Naive thymus-derived CD4-positive, alpha-beta T cell (primary cell): ENCODE measurements at regions of chr1 and their contacts with region 1.

Region 1: GRCh38 chr1:201895913-201896807 is 7.5 kb downstream of the SHISA4 start:
- DNase-seq: peak; percentile 54 to 86 (median 73)
- ATAC-seq: peak; percentile 93
- H3K4me3 ChIP-seq: no peak overlapping the region
- H3K4me3 Mint-ChIP-seq: peak overlapping the region in 9 of 10 donors; percentile 5 to 73 (median 60)
- H3K27ac ChIP-seq: no peak overlapping the region
- H3K27ac Mint-ChIP-seq: peak overlapping the region in 7 of 9 donors; percentile 10 to 86 (median 59)
- H3K4me1 ChIP-seq: peaks cover 0 to 8% of the 10 kb centered on the region in 2 donors
- H3K4me1 Mint-ChIP-seq: peaks cover 0 to 16% (median 6%) of the 10 kb centered on the region in 7 donors
- H3K27me3 ChIP-seq: no peaks in the 10 kb centered on the region
- H3K27me3 Mint-ChIP-seq: peaks cover 12 to 34% (median 25%) of the 10 kb centered on the region in 5 donors

Region 2: DNA sequence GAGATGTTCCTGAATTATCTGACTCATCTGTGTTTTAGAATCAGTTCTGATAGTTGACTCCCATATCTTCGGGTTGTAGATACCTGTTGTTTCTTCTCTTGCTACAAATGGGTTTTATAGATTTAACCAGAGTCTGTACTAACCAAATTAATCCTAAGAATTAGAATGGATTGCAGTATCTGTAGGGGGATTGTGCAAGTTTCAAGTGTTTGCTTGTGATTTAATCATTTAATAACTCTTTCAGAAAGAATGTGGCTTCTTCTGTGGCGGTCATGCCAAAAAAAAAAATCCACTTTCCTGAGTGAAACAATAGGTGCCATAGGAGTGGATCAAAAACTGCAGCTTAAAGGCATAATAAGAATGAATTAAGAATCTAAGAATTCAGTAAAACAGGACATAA is 57.8 kb before region 1 on chr1:
- CTCF ChIA-PET with region 1: no interaction called
- POLR2A ChIA-PET with region 1: interaction called, 10 read pairs
- intact Hi-C with region 1: no loop called
- DNase-seq: no peak
- ATAC-seq: no peak
- H3K4me3 ChIP-seq: no peak overlapping the region
- H3K4me3 Mint-ChIP-seq: no peak overlapping the region
- H3K27ac ChIP-seq: no peak overlapping the region
- H3K27ac Mint-ChIP-seq: no peak overlapping the region
- H3K4me1 ChIP-seq: no peaks in the 10 kb centered on the region
- H3K4me1 Mint-ChIP-seq: peaks cover 27 to 80% (median 58%) of the 10 kb centered on the region in 7 donors
- H3K27me3 ChIP-seq: no peaks in the 10 kb centered on the region
- H3K27me3 Mint-ChIP-seq: no peaks in the 10 kb centered on the region

Region 3: DNA sequence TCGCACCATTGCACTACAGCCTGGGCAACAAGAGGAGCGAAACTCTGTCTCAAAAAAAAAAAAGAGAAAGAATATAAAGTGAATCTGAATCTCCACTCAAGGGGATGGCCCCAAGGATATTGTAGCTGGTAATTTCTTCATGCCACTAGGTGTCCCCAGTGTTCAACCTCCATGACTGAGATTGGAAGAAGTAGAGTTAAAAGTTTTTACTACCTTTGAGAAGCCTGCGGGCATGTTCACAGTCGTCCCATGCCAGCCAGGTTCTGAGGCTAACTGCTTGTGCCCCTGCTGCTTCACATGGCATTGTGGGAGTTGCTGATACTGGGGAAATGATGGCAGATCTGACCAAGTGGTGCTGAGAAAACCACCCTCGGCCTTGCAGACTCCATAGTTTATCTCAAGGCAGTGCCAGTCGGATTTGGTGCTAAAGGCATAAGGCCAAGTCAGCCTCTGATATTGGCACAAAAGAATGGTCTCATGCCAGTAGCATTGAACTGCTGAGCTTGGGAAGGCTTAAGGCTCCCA is 18.2 kb before region 1 on chr1:
- CTCF ChIA-PET with region 1: interaction called, 5 read pairs
- POLR2A ChIA-PET with region 1: no interaction called
- intact Hi-C with region 1: loop called in 1 of 2 experiments (anchors 2 kb)
- DNase-seq: peak in 2 of 9 donors; percentile 22 to 23
- ATAC-seq: peak; percentile 55
- H3K4me3 ChIP-seq: no peak overlapping the region
- H3K4me3 Mint-ChIP-seq: no peak overlapping the region
- H3K27ac ChIP-seq: no peak overlapping the region
- H3K27ac Mint-ChIP-seq: peak overlapping the region in 4 of 9 donors; percentile 40 to 60 (median 46)
- H3K4me1 ChIP-seq: no peaks in the 10 kb centered on the region
- H3K4me1 Mint-ChIP-seq: peaks cover 0 to 3% (median 0%) of the 10 kb centered on the region in 7 donors
- H3K27me3 ChIP-seq: no peaks in the 10 kb centered on the region
- H3K27me3 Mint-ChIP-seq: no peaks in the 10 kb centered on the region

Region 4: GRCh38 chr1:201885531-201886075 is 10.6 kb before region 1 on chr1:
- CTCF ChIA-PET with region 1: interaction called, 12 read pairs
- POLR2A ChIA-PET with region 1: no interaction called
- intact Hi-C with region 1: no loop called
- DNase-seq: no peak
- ATAC-seq: no peak
- H3K4me3 ChIP-seq: no peak overlapping the region
- H3K4me3 Mint-ChIP-seq: no peak overlapping the region
- H3K27ac ChIP-seq: no peak overlapping the region
- H3K27ac Mint-ChIP-seq: no peak overlapping the region
- H3K4me1 ChIP-seq: peaks cover 0 to 5% of the 10 kb centered on the region in 2 donors
- H3K4me1 Mint-ChIP-seq: peaks cover 2 to 18% (median 10%) of the 10 kb centered on the region in 7 donors
- H3K27me3 ChIP-seq: peaks cover 0 to 6% of the 10 kb centered on the region in 2 donors
- H3K27me3 Mint-ChIP-seq: peaks cover 5 to 35% (median 19%) of the 10 kb centered on the region in 5 donors

Region 5: DNA sequence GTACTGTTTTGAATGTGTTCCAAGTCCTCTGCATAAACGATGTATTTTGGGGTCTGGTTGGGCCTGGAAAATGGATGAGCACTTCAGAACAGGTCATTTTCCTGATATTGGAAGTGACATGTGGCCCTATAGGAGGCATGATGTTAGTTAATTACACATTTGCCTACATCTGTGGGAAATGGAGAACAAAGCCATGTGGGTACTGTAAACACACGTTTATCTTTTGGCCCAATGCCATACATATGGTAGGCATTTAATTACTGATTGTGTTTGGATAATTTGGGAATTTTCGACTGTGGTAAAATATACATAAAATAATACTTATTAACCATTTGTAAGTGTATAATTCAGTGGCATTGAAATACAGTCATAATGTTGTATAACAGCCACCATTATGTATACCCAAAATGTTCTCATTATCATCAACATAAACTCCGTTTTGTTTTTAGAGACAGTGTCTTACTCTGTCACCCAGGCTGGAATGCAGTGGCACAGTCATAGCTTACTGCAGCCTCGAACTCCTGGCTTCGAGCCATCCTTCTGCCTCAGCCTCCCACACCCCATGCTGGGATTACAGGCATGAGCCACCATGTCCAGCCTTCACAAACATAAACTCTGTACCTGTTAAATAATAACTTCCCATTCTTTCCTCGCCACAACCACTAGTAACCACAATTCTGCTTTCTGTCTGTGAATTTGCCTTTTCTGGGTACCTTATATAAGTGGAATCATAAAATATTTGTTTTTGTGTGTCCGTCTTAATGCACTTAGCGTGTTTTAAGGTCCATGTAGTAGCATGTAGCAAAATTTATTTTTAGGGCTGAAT is 74.4 kb after region 1 on chr1:
- CTCF ChIA-PET with region 1: interaction called, 21 read pairs
- POLR2A ChIA-PET with region 1: no interaction called
- intact Hi-C with region 1: loop called in 1 of 2 experiments (anchors 1 kb)
- DNase-seq: no peak
- ATAC-seq: no peak
- H3K4me3 ChIP-seq: no peak overlapping the region
- H3K4me3 Mint-ChIP-seq: no peak overlapping the region
- H3K27ac ChIP-seq: no peak overlapping the region
- H3K27ac Mint-ChIP-seq: no peak overlapping the region
- H3K4me1 ChIP-seq: no peaks in the 10 kb centered on the region
- H3K4me1 Mint-ChIP-seq: peaks cover 0 to 2% (median 0%) of the 10 kb centered on the region in 7 donors
- H3K27me3 ChIP-seq: no peaks in the 10 kb centered on the region
- H3K27me3 Mint-ChIP-seq: peaks cover 0 to 15% (median 0%) of the 10 kb centered on the region in 5 donors

Region 6: GRCh38 chr1:201999625-202000238 is 103.6 kb after region 1 on chr1:
- CTCF ChIA-PET with region 1: interaction called, 3 read pairs
- POLR2A ChIA-PET with region 1: no interaction called
- intact Hi-C with region 1: loop called in 1 of 2 experiments (anchors 1 kb)
- DNase-seq: peak in 4 of 9 donors; percentile 18 to 29 (median 23)
- ATAC-seq: peak; percentile 82
- H3K4me3 ChIP-seq: no peak overlapping the region
- H3K4me3 Mint-ChIP-seq: no peak overlapping the region
- H3K27ac ChIP-seq: no peak overlapping the region
- H3K27ac Mint-ChIP-seq: no peak overlapping the region
- H3K4me1 ChIP-seq: no peaks in the 10 kb centered on the region
- H3K4me1 Mint-ChIP-seq: no peaks in the 10 kb centered on the region
- H3K27me3 ChIP-seq: no peaks in the 10 kb centered on the region
- H3K27me3 Mint-ChIP-seq: no peaks in the 10 kb centered on the region

Region 7: GRCh38 chr1:202135221-202135721 is 239.1 kb after region 1 on chr1:
- CTCF ChIA-PET with region 1: interaction called, 5 read pairs
- POLR2A ChIA-PET with region 1: no interaction called
- intact Hi-C with region 1: loop called in 1 of 2 experiments (anchors 1 kb)
- DNase-seq: peak in 7 of 9 donors; percentile 27 to 63 (median 53)
- ATAC-seq: peak; percentile 92
- H3K4me3 ChIP-seq: no peak overlapping the region
- H3K4me3 Mint-ChIP-seq: no peak overlapping the region
- H3K27ac ChIP-seq: no peak overlapping the region
- H3K27ac Mint-ChIP-seq: peak overlapping the region in 2 of 9 donors; percentile 24 to 43
- H3K4me1 ChIP-seq: no peaks in the 10 kb centered on the region
- H3K4me1 Mint-ChIP-seq: peaks cover 4 to 15% (median 8%) of the 10 kb centered on the region in 7 donors
- H3K27me3 ChIP-seq: no peaks in the 10 kb centered on the region
- H3K27me3 Mint-ChIP-seq: no peaks in the 10 kb centered on the region

Region 8: DNA sequence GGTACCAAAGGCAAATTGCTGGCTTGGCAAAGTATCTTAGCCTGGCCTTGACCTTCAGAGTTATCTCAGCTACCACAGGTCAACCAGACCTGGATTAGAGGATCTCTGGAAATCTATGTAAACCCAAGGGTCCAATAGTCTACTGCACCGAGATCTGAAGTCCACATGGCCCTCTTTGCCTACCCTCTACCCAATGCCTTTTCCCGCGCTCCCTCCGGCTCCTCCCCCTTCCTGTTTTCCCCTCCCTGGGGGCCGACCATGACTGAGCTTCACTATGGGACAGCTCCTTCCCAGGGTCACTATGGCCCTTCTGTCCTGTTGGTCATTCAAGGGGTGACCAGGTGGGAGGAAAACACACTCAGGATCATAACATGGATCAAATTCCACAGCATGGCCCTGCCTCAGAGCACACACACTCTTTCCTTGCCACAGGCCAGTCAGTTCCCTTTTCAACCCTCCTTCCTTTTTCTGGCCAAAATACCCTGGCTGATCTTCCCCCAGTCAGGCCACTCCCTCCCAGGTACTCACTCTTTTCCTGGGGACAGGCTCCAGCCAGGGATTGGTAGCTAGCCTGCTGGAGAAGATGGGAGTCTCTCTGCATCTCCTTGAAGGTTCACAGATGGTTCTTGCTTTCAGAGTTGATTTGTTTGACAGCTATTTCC is 1091.9 kb after region 1 on chr1:
- CTCF ChIA-PET with region 1: no interaction called
- POLR2A ChIA-PET with region 1: no interaction called
- intact Hi-C with region 1: no loop called
- DNase-seq: no peak
- ATAC-seq: no peak
- H3K4me3 ChIP-seq: no peak overlapping the region
- H3K4me3 Mint-ChIP-seq: no peak overlapping the region
- H3K27ac ChIP-seq: no peak overlapping the region
- H3K27ac Mint-ChIP-seq: no peak overlapping the region
- H3K4me1 ChIP-seq: no peaks in the 10 kb centered on the region
- H3K4me1 Mint-ChIP-seq: peaks cover 0 to 4% (median 0%) of the 10 kb centered on the region in 7 donors
- H3K27me3 ChIP-seq: peaks cover 0 to 1% of the 10 kb centered on the region in 2 donors
- H3K27me3 Mint-ChIP-seq: peaks cover 10 to 40% (median 14%) of the 10 kb centered on the region in 5 donors